Caco-2 (cell line): ENCODE measurements at regions of chr14 and their contacts with region 1.

Region 1: DNA sequence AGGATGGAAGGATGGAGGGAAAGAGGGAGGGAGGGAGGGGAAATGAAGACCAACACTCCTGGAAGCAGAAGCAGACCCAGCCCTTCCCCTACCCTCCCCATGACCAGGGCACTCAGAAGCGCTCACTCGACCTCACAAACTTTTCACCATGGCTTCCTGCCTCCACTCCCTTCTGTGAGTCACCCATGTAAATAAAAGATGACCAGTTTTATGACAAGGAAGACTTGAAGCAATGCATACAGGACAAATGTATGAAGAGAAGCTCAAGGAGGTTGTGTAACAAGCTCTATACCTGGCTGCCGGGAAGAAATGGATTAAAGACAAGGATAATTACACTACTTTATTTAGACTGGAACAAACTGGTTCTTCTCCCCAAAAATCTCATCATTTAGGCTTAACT is 63.8 kb downstream of the CDC42BPB start:
- DNase-seq: peak; percentile 48 to 55
- H3K4me3 ChIP-seq: no peak overlapping the region
- H3K4me3 Mint-ChIP-seq: peak overlapping the region; percentile 10
- H3K27ac Mint-ChIP-seq: peak overlapping the region; percentile 67
- H3K4me1 ChIP-seq: peaks cover 10% of the 10 kb centered on the region
- H3K4me1 Mint-ChIP-seq: peaks cover 19% of the 10 kb centered on the region
- H3K27me3 ChIP-seq: no peaks in the 10 kb centered on the region
- H3K27me3 Mint-ChIP-seq: no peaks in the 10 kb centered on the region
- CTCF ChIP-seq: no peak

Region 2: GRCh38 chr14:102900631-102901571 is 92.6 kb before region 1 on chr14:
- CTCF ChIA-PET with region 1: no interaction called
- POLR2A ChIA-PET with region 1: no interaction called
- intact Hi-C with region 1: no loop called
- DNase-seq: no peak
- H3K4me3 ChIP-seq: no peak overlapping the region
- H3K4me3 Mint-ChIP-seq: no peak overlapping the region
- H3K27ac Mint-ChIP-seq: no peak overlapping the region
- H3K4me1 ChIP-seq: no peaks in the 10 kb centered on the region
- H3K4me1 Mint-ChIP-seq: no peaks in the 10 kb centered on the region
- H3K27me3 ChIP-seq: no peaks in the 10 kb centered on the region
- H3K27me3 Mint-ChIP-seq: no peaks in the 10 kb centered on the region
- CTCF ChIP-seq: no peak

Region 3: GRCh38 chr14:103031956-103032355 is 38.4 kb after region 1 on chr14:
- CTCF ChIA-PET with region 1: no interaction called
- POLR2A ChIA-PET with region 1: no interaction called
- intact Hi-C with region 1: loop called (anchors 5 kb)
- DNase-seq: peak in 1 of 2 experiments; percentile 52
- H3K4me3 ChIP-seq: no peak overlapping the region
- H3K4me3 Mint-ChIP-seq: no peak overlapping the region
- H3K27ac Mint-ChIP-seq: peak overlapping the region; percentile 70
- H3K4me1 ChIP-seq: 0 out of 2 replicates have a peak, but pooled peaks cover 10% of the 10 kb centered on the region
- H3K4me1 Mint-ChIP-seq: peaks cover 2% of the 10 kb centered on the region
- H3K27me3 ChIP-seq: no peaks in the 10 kb centered on the region
- H3K27me3 Mint-ChIP-seq: no peaks in the 10 kb centered on the region
- CTCF ChIP-seq: peak in 1 of 2 experiments; percentile 23

Region 4: GRCh38 chr14:103126493-103127304 is 133.2 kb after region 1 on chr14:
- CTCF ChIA-PET with region 1: no interaction called
- POLR2A ChIA-PET with region 1: no interaction called
- intact Hi-C with region 1: no loop called
- DNase-seq: peak; percentile 78 to 90
- H3K4me3 ChIP-seq: peak overlapping the region; percentile 38
- H3K4me3 Mint-ChIP-seq: peak overlapping the region; percentile 63
- H3K27ac Mint-ChIP-seq: peak overlapping the region; percentile 20
- H3K4me1 ChIP-seq: peaks cover 7% of the 10 kb centered on the region
- H3K4me1 Mint-ChIP-seq: peaks cover 6% of the 10 kb centered on the region
- H3K27me3 ChIP-seq: no peaks in the 10 kb centered on the region
- H3K27me3 Mint-ChIP-seq: no peaks in the 10 kb centered on the region
- CTCF ChIP-seq: peak in 1 of 2 experiments; percentile 12